Cardiac septum (tissue), 1 donor: ENCODE measurements at regions of chr12 and their contacts with region 1.

Region 1: GRCh38 chr12:115504306-115504901 is 773.1 kb downstream of the MED13L start:
- DNase-seq: no peak

Region 2: GRCh38 chr12:114729731-114730130 is 774.7 kb before region 1 on chr12:
- intact Hi-C with region 1: no loop called
- DNase-seq: no peak

Region 3: GRCh38 chr12:115227137-115227615 is 277.2 kb before region 1 on chr12:
- intact Hi-C with region 1: no loop called
- DNase-seq: no peak

Region 4: DNA sequence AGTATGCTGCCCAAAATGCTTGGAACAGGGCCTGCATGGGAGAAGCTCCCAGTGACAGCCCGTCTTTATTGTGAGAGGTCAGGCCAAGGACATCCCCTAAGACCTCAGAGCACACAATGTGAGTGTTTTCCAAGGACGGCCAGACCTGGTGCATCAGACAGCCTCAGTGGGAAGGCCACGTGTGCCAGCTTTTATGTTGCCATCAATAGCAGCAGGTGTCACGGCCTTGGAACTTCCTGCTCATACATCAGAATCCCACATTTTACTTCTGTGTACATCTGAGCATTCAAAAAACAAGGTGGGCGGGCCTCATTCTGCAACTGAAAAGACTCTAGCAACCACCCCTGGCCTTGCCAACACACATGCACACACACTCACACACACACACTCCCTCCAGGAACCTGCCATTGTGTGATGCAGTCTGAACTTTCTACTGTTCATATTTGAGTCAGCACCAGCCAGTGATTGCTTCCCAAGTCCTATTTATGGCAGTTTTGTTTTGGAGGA is 67.3 kb before region 1 on chr12:
- intact Hi-C with region 1: loop called (anchors 2 kb)
- DNase-seq: no peak

Region 5: GRCh38 chr12:115451780-115452736 is 52.3 kb before region 1 on chr12:
- intact Hi-C with region 1: loop called (anchors 1 kb)
- DNase-seq: no peak

Region 6: GRCh38 chr12:115598871-115599811 is 94.7 kb after region 1 on chr12:
- intact Hi-C with region 1: loop called (anchors 5 kb)
- DNase-seq: no peak

Region 7: DNA sequence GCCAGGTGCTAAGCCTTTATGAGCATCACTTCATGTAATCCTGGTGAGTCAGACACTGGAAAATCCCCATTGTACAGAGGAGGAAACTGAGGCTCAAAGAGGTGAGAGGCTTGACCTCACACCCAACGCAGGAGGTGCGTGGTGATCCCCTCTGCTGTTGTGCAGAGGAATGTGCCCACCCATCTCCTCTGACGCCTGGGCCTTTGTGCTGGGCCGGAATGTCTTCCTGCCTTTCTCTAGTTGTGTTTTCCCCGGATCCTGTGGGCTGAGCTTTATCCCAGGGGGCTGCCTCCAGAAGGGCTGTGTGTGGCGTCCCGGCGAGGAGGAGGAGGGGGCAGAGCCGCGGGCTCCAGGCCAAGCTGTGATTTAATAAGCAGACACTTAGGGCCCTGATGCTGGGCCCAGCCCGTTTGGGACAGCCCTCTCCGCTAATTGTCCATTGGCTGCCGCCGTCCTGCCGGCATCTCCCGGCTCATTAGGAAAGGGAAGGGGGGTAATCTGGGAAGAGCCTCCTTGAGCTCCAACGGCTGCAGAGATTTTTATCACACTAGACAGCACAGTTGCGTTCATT is 119.4 kb after region 1 on chr12:
- intact Hi-C with region 1: loop called (anchors 2 kb)
- DNase-seq: peak; percentile 87

Region 8: DNA sequence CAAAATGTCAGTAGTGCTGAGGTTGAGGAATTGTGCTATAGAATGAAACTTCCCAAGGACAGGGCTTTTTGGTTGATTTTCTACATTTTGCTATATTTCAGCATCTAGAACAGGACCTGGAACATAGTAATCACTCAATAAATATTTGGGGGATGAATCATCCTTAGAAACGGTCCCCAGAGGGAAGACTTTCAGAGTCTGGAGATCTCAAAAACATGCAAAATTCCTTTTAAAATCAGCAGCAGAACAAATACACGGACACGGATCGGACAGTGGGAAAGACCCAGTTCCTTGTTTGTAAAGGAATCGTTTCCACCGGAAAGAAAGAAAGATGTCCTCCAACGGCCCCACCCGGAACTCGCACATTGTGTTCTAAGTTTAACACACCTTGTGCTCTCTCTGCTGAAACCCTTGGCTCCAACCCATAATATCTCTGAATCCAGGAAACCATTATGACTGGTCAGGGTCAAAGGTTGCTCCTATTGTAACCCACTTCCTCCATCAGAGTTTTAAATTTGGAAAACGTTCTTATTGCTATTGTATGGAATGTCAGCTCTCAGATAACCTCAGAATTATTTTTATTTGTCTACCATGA is 155.9 kb after region 1 on chr12:
- intact Hi-C with region 1: loop called (anchors 10 kb)
- DNase-seq: no peak